HCT116 (cell line): ENCODE measurements at regions of chr20 and their contacts with region 1.

Region 1: DNA sequence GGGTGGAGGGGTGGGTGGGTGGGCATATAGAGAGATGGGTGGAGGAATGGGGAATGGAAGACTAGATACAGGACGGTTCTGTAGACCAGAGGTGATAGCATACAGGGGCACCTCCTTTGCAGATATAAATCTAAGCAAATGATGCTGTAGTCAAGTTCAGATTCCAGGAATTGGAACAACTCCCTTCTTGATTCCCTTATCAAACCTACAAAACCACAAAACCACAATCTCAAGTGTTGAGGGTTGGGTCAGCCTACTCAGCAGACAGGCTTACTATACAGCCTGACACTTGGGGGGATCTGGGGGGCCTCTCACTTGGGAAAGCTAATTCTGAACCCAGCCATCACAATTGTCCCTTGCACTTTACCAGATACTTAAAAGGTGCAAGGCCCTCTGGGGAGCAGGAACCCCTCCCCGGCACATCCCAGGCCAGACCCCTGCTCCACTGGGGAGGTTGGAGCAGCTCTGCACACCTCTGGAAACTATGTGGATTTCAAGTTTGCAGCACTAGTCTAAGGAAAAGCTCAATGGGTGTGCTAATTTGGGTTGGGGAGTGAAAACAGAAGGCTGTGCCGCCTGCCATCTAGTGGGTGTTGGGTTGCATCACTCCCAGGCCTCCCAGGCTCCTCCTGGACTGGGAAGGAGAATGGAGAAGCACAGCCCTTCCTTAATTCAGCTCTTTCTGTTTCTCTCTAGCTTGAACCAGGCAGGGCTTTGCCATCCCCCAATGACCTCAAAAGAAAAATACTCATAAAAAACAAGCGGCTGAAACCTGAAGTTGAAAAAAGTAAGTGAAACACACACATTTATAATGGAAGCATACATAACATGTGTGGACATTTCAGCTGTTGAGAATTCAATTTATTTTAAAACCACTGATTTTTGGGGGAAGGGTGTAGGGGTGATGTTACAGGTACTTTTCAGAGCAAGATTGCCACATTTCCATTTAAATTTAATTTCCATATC is 121.2 kb upstream of the LAMP5 start:
- DNase-seq: peak; percentile 41
- ATAC-seq: peak; percentile 100
- H3K4me3 ChIP-seq: no peak overlapping the region
- H3K27ac ChIP-seq: no peak overlapping the region
- H3K4me1 ChIP-seq: no peaks in the 10 kb centered on the region
- H3K27me3 ChIP-seq: no peaks in the 10 kb centered on the region
- CTCF ChIP-seq: peak; percentile 54 to 85 (median 81); a peak in 5 of 6 replicates
- POLR2A ChIP-seq: no peak
- RAD21 ChIP-seq: peak; percentile 78

Region 2: GRCh38 chr20:8749986-8750385 is 643.2 kb before region 1 on chr20:
- CTCF ChIA-PET with region 1: interaction called, 22 read pairs
- POLR2A ChIA-PET with region 1: no interaction called
- RAD21 ChIA-PET with region 1: interaction called in 1 of 2 experiments, 3 read pairs
- intact Hi-C with region 1: no loop called
- DNase-seq: no peak
- ATAC-seq: no peak
- H3K4me3 ChIP-seq: no peak overlapping the region
- H3K27ac ChIP-seq: no peak overlapping the region
- H3K4me1 ChIP-seq: no peaks in the 10 kb centered on the region
- H3K27me3 ChIP-seq: no peaks in the 10 kb centered on the region
- CTCF ChIP-seq: no peak
- POLR2A ChIP-seq: no peak
- RAD21 ChIP-seq: no peak

Region 3: DNA sequence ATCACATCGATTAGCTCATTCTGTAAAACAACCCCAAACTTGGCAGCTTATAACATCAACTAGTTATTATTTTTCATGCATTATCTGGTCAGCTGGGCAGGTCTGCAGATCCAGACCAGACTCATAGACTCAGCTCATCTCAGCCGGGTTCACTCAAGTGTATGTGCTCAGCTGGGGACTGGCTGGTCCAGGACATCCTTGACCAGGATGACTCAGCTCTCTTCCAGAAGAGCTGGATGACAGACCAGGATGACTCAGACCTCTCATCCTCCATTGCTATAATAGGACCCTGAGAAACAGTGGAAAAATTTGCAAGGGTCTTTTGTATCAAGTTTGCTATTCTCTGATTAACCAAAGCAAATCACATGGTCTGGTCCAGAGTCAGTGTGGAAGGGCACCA is 636.8 kb before region 1 on chr20:
- CTCF ChIA-PET with region 1: interaction called, 46 read pairs
- POLR2A ChIA-PET with region 1: no interaction called
- RAD21 ChIA-PET with region 1: interaction called in 1 of 2 experiments, 3 read pairs
- intact Hi-C with region 1: loop called (anchors 2 kb)
- DNase-seq: peak; percentile 18
- ATAC-seq: peak; percentile 85
- H3K4me3 ChIP-seq: no peak overlapping the region
- H3K27ac ChIP-seq: no peak overlapping the region
- H3K4me1 ChIP-seq: peaks cover 3 to 15% of the 10 kb centered on the region in 2 experiments; a peak in 3 of 4 replicates
- H3K27me3 ChIP-seq: no peaks in the 10 kb centered on the region
- CTCF ChIP-seq: no peak
- POLR2A ChIP-seq: no peak
- RAD21 ChIP-seq: no peak

Region 4: GRCh38 chr20:8790442-8791074 is 602.6 kb before region 1 on chr20:
- CTCF ChIA-PET with region 1: interaction called, 35 read pairs
- POLR2A ChIA-PET with region 1: no interaction called
- RAD21 ChIA-PET with region 1: no interaction called
- intact Hi-C with region 1: loop called (anchors 2 kb)
- DNase-seq: peak; percentile 24
- ATAC-seq: peak; percentile 70
- H3K4me3 ChIP-seq: no peak overlapping the region
- H3K27ac ChIP-seq: no peak overlapping the region
- H3K4me1 ChIP-seq: peaks cover 0 to 4% of the 10 kb centered on the region in 2 experiments; a peak in 1 of 4 replicates
- H3K27me3 ChIP-seq: no peaks in the 10 kb centered on the region
- CTCF ChIP-seq: peak; percentile 53 to 96 (median 85); a peak in 5 of 6 replicates
- POLR2A ChIP-seq: no peak
- RAD21 ChIP-seq: peak; percentile 66

Region 5: DNA sequence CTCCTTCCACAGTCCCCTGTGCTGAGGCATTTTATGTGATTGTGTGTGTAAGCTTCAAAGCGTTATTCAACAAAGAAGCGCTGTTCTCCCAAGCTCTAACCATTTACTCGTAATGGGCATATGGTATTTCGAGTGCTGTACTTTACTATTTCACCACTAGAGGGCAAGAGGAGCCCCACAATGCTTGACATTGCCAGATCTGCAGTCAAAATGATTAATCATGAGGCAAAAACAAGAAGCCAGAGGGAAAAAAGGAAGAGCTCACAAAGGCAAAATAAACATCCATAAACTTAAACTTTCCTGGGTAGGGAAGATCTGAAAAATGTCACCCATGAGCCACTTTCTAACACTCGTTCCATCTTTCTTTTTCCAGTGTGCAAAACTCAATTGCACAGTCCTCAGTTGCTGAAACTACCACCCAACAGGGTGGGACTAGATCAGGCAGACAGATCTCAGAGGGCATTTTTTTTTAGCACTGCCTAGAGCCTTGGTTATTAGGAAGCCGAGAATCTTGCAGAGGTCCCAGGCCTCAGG is 539.3 kb before region 1 on chr20:
- CTCF ChIA-PET with region 1: interaction called, 26 read pairs
- POLR2A ChIA-PET with region 1: no interaction called
- RAD21 ChIA-PET with region 1: interaction called, 3 to 8 read pairs
- intact Hi-C with region 1: loop called (anchors 10 kb)
- DNase-seq: peak; percentile 40
- ATAC-seq: peak; percentile 92
- H3K4me3 ChIP-seq: no peak overlapping the region
- H3K27ac ChIP-seq: no peak overlapping the region
- H3K4me1 ChIP-seq: no peaks in the 10 kb centered on the region
- H3K27me3 ChIP-seq: no peaks in the 10 kb centered on the region
- CTCF ChIP-seq: peak; percentile 69 to 88 (median 80)
- POLR2A ChIP-seq: no peak
- RAD21 ChIP-seq: peak; percentile 80

Region 6: DNA sequence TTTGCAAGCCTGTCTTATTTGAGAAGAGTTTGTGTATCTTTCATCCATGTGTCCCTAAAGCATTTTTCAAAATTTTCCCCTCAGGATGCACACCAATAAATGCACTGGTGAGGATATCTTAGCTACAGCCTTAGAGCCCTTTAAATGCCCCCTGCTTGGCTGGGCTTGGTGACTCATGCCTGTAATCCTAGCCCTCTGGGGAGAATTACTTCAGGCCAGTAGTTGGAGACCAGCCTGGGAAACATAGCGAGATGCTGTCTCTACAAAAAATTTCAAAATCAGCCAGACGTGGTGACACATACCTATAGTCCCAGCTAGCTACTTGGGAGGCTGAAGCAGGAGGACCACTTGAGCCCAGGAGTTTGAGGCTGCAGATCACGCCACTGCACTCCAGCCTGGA is 358.0 kb before region 1 on chr20:
- CTCF ChIA-PET with region 1: no interaction called
- POLR2A ChIA-PET with region 1: no interaction called
- RAD21 ChIA-PET with region 1: no interaction called
- intact Hi-C with region 1: no loop called
- DNase-seq: peak; percentile 21
- ATAC-seq: peak; percentile 91
- H3K4me3 ChIP-seq: no peak overlapping the region
- H3K27ac ChIP-seq: no peak overlapping the region
- H3K4me1 ChIP-seq: peaks cover 10 to 13% of the 10 kb centered on the region in 2 experiments
- H3K27me3 ChIP-seq: no peaks in the 10 kb centered on the region
- CTCF ChIP-seq: no peak
- POLR2A ChIP-seq: no peak
- RAD21 ChIP-seq: no peak

Region 7: DNA sequence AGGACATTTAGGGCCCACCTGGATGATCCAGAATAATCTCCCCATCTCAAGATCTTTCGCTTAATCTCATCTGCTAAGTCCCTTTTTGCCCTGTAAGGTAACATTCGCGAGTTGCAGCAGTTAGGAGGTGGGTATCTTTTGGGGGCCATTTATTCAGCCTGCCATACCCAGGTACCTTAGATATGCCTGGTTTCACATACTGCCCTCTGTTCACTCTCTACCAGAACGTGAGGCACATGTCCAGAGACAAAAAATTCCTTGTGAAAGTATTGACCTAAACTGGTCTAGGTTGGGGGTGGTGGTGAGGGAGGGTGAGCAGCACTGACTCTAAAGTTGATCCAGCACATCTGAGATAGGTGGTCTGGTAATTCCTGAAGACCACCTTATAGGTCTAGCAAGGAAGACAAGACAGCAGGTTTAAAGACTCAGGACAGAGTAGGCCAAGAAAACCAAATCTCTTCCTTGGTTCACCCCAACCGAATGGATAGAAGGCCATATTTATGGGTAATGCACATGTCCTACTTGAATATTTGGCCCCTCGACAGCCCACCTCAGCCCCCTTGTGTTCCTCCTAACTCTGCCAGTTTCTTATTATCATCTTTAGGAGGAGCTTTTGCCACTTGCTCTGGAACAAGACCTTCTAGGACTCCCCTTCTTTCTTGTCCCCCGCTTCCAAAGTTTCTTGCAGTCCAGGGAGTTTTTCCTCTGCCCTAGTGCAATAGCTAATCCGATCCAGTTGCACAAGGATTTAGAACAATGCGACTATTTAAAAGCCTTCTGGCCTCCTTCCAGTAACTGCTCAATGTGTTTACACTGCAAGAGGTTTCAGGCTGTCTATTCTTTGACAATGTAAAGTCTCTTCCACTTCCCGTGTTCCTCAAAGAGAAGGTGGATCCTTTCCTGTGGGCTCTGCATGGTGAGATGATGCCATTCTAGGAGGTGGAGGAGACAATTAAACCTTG is 91.8 kb before region 1 on chr20:
- CTCF ChIA-PET with region 1: no interaction called
- POLR2A ChIA-PET with region 1: no interaction called
- RAD21 ChIA-PET with region 1: no interaction called
- intact Hi-C with region 1: no loop called
- DNase-seq: peak; percentile 6
- ATAC-seq: no peak
- H3K4me3 ChIP-seq: no peak overlapping the region
- H3K27ac ChIP-seq: no peak overlapping the region
- H3K4me1 ChIP-seq: no peaks in the 10 kb centered on the region; a peak in 1 of 4 replicates
- H3K27me3 ChIP-seq: no peaks in the 10 kb centered on the region
- CTCF ChIP-seq: no peak
- POLR2A ChIP-seq: no peak
- RAD21 ChIP-seq: no peak

Region 8: GRCh38 chr20:9323622-9324021 is 69.6 kb before region 1 on chr20:
- CTCF ChIA-PET with region 1: no interaction called
- POLR2A ChIA-PET with region 1: no interaction called
- RAD21 ChIA-PET with region 1: no interaction called
- intact Hi-C with region 1: no loop called
- DNase-seq: peak; percentile 7
- ATAC-seq: peak; percentile 95
- H3K4me3 ChIP-seq: no peak overlapping the region
- H3K27ac ChIP-seq: no peak overlapping the region
- H3K4me1 ChIP-seq: no peaks in the 10 kb centered on the region
- H3K27me3 ChIP-seq: no peaks in the 10 kb centered on the region
- CTCF ChIP-seq: peak in 2 of 3 experiments; percentile 57 to 73; a peak in 4 of 6 replicates
- POLR2A ChIP-seq: no peak
- RAD21 ChIP-seq: peak; percentile 12; the same call in 1 of the 2 replicates